Left cardiac atrium (tissue), 4 donors: ENCODE measurements at regions of chr10 and their contacts with region 1.

Region 1: DNA sequence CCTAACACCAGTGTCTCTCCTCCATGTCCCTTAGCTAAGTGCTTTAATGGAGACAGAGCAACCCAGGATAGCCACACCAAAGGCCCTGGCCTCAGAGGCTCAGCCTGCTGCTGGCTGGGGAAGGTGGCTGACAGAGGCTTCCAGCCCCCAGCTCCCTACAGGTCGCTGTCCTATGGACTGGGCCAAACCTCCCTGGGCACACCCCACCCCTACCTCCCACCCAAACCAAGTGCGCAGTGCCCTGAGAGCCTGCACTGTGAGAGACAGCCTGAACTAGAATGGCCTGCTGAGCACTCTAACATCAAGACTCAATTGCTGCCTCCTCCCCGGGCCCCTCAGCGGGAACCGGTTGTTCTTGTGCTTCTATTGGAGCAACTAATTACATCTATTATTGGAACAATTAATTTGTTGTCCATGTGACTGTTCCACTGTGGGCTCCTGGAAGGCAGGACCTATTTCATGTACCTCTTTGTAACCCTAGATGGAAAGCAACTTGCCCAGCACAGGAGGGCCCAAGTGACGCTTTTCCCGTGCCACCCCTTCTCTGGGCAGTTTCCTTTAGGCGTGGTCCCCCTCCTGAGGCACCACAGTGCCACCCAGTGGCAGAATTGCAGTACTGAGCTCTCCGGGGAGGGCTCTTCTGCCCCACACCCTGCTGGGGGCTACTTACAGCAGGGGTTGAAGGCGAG is 63.6 kb upstream of the WAPL start:
- DNase-seq: peak; percentile 66
- ATAC-seq: peak; percentile 92 to 93

Region 2: DNA sequence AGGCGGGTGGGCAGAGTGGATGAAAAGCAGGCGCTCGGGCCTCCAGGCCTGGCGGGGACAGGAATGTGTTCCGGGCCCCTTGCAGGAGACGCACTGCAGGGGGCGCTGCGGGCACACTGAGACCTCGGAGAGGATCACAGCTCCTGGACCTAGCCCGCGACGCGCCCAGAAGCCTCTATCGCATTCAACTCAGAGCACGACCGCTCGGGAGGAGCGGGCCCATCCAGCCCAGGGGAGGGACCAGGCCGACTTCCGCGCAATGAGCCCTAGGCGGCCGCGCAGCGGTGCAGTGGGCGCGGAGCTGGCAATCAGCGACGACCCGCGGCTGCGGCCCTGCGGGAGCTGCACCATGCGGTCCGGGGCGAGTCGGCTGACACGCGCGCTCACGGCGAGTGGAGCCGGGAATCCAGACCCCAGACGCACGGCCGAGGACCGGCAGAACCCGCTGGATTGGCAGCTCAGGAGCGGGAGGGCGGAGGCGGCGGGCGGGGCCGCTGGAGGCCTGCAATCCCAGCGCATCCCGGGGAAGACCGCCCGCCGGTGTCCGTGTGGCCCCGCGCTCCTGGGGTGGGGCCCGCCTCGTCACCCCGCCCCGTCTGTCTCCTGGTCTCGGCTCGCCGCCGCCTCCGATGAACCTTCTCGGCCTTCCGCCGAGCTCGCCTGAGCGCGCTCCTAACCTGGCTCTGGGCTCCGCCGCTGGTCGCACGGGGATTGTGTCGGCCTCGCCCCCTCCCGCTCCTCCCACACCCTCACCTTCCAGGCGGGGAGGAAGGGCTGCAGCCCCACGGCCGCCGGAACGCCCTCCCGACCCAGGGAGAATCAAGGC is 185.1 kb before region 1 on chr10:
- intact Hi-C with region 1: loop called (anchors 2 to 5 kb)
- DNase-seq: peak; percentile 96
- ATAC-seq: peak; percentile 94 to 95